ENCODE measurements at regions of chr2 and their contacts with region 1.

Region 1: GRCh38 chr2:66434679-66435548 is at the start of gene MEIS1:
- DNase-seq: peak; percentile 97
- H3K4me3 ChIP-seq: peak within 1 kb of the TSS; percentile 73 to 82
- H3K27ac ChIP-seq: peak within 1 kb of the TSS; percentile 86 to 92
- H3K4me1 ChIP-seq: no peaks in the 10 kb centered on the region
- H3K27me3 ChIP-seq: no peaks in the 10 kb centered on the region
- CTCF ChIP-seq: no peak
- POLR2A ChIP-seq: peak; percentile 28
- total RNA-seq, gene MEIS1: 10.8 to 13.8 TPM

Region 2: DNA sequence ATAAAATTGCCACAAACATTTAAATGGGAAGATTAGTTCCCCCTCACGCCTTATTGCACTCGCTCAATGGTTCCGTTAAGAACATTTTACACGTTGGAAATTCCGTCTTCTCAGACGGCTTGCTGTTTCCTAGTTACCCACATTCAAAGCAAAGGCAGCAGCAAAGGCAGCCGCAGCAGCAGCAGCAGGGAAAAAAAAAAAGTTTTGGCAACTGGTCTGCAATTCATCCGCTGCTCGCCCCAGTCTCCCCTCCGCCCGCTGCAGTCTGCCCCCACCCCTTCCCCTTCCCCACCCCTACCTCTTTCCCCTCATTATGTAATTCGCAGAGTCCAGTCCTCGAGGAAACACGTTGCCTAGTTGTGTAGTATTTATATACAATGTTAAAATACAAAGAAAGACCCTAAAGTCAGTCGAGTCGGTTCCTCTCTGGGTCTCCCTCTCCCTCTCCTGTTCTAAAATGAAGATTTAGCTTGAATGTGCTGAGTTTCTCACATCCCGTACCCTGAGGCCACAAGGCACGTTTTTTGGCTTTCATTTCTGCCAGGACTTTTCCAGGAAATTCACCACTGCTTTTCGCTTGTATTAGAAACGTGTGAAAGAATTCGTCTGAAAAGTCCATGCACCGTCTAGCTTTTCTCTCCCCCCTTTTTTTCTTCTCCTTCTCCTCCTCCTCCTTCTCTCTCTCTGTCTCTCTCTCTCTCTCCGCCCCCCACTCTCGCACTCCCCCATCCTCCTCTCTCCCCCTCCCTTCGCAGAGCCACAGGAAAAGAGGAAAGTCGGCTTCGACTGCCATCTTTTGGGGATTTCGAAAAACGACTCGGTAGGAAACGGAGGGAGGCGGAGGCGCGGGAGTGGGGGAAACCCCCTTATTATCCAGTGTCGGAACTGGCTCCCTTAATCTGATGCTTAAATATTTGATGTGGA is 140.0 kb after region 1 on chr2:
- intact Hi-C with region 1: loop called (anchors 5 kb)
- DNase-seq: peak; percentile 78
- H3K4me3 ChIP-seq: peak overlapping the region; percentile 39 to 63
- H3K27ac ChIP-seq: peak overlapping the region; percentile 55 to 70
- H3K4me1 ChIP-seq: peaks cover 8% of the 10 kb centered on the region
- H3K27me3 ChIP-seq: no peaks in the 10 kb centered on the region
- CTCF ChIP-seq: peak; percentile 9 to 38 (median 23)
- POLR2A ChIP-seq: no peak

Region 3: GRCh38 chr2:66699793-66700676 is 265.1 kb after region 1 on chr2:
- intact Hi-C with region 1: loop called (anchors 10 kb)
- DNase-seq: no peak
- H3K4me3 ChIP-seq: no peak overlapping the region
- H3K27ac ChIP-seq: no peak overlapping the region
- H3K4me1 ChIP-seq: peaks cover 12% of the 10 kb centered on the region
- H3K27me3 ChIP-seq: no peaks in the 10 kb centered on the region
- CTCF ChIP-seq: no peak
- POLR2A ChIP-seq: no peak

Region 4: GRCh38 chr2:67649331-67650261 is 1214.7 kb after region 1 on chr2:
- intact Hi-C with region 1: loop called (anchors 10 kb)
- DNase-seq: peak; percentile 29
- H3K4me3 ChIP-seq: no peak overlapping the region
- H3K27ac ChIP-seq: peak overlapping the region in 1 of 2 donors; percentile 44
- H3K4me1 ChIP-seq: peaks cover 17% of the 10 kb centered on the region
- H3K27me3 ChIP-seq: no peaks in the 10 kb centered on the region
- CTCF ChIP-seq: no peak
- POLR2A ChIP-seq: no peak